ENCODE measurements at regions of chr1 and their contacts with region 1.

Region 1: GRCh38 chr1:110312188-110313121 is 26.7 kb upstream of the RBM15 start:
- DNase-seq: peak; percentile 89
- H3K4me3 ChIP-seq: no peak overlapping the region
- H3K27ac ChIP-seq: no peak overlapping the region
- H3K4me1 ChIP-seq: peaks cover 0 to 10% (median 7%) of the 10 kb centered on the region in 4 donors
- H3K27me3 ChIP-seq: no peaks in the 10 kb centered on the region
- CTCF ChIP-seq: peak; percentile 89 to 91 (median 90)
- EP300 ChIP-seq: no peak
- POLR2A ChIP-seq: no peak

Region 2: GRCh38 chr1:110203021-110203661 is 109.3 kb before region 1 on chr1:
- intact Hi-C with region 1: loop called (anchors 1 kb)
- DNase-seq: no peak
- H3K4me3 ChIP-seq: no peak overlapping the region
- H3K27ac ChIP-seq: no peak overlapping the region
- H3K4me1 ChIP-seq: no peaks in the 10 kb centered on the region
- H3K27me3 ChIP-seq: no peaks in the 10 kb centered on the region
- CTCF ChIP-seq: peak; percentile 74 to 90 (median 82)
- EP300 ChIP-seq: no peak
- POLR2A ChIP-seq: no peak

Region 3: GRCh38 chr1:110209715-110210603 is 102.5 kb before region 1 on chr1 and contains the start of gene KCNC4:
- intact Hi-C with region 1: loop called (anchors 1 kb)
- DNase-seq: peak; percentile 94
- H3K4me3 ChIP-seq: peak within 1 kb of the TSS; percentile 52 to 83 (median 76)
- H3K27ac ChIP-seq: peak within 1 kb of the TSS; percentile 76 to 90 (median 80)
- H3K4me1 ChIP-seq: peaks cover 0 to 30% (median 21%) of the 10 kb centered on the region in 4 donors
- H3K27me3 ChIP-seq: peaks cover 0 to 15% (median 0%) of the 10 kb centered on the region in 3 donors
- CTCF ChIP-seq: no peak
- EP300 ChIP-seq: no peak
- POLR2A ChIP-seq: no peak
- total RNA-seq, gene KCNC4: 1.8 to 6.4 (median 3.2) TPM

Region 4: GRCh38 chr1:110460253-110461220 is 148.1 kb after region 1 on chr1:
- intact Hi-C with region 1: loop called (anchors 5 kb)
- DNase-seq: peak; percentile 78
- H3K4me3 ChIP-seq: no peak overlapping the region
- H3K27ac ChIP-seq: no peak overlapping the region
- H3K4me1 ChIP-seq: no peaks in the 10 kb centered on the region
- H3K27me3 ChIP-seq: no peaks in the 10 kb centered on the region
- CTCF ChIP-seq: peak; percentile 90 to 95 (median 94)
- EP300 ChIP-seq: no peak
- POLR2A ChIP-seq: no peak

Measured in sigmoid colon (tissue), 7 donors.